ENCODE measurements at regions of chr1 and their contacts with region 1.

Region 1: GRCh38 chr1:151993654-151994496 is at the start of gene S100A10:
- DNase-seq: peak; percentile 64 to 82 (median 81)
- ATAC-seq: peak; percentile 85
- H3K4me3 ChIP-seq: peak within 1 kb of the TSS; percentile 88
- H3K4me3 Mint-ChIP-seq: peak within 1 kb of the TSS; percentile 90 to 100 (median 96)
- H3K27ac ChIP-seq: peak within 1 kb of the TSS; percentile 83
- H3K27ac Mint-ChIP-seq: peak within 1 kb of the TSS; percentile 89 to 98 (median 95)
- H3K4me1 ChIP-seq: peaks cover 22 to 37% of the 10 kb centered on the region in 2 donors
- H3K4me1 Mint-ChIP-seq: peaks cover 33 to 56% (median 45%) of the 10 kb centered on the region in 7 donors
- H3K27me3 ChIP-seq: no peaks in the 10 kb centered on the region
- H3K27me3 Mint-ChIP-seq: peaks cover 0 to 10% (median 0%) of the 10 kb centered on the region in 5 donors
- total RNA-seq, gene S100A10: 131 to 361 (median 143) TPM

Region 2: GRCh38 chr1:151539990-151540981 is 453.6 kb before region 1 on chr1 and contains the start of gene TUFT1:
- CTCF ChIA-PET with region 1: interaction called, 5 read pairs
- POLR2A ChIA-PET with region 1: no interaction called
- intact Hi-C with region 1: loop called in 1 of 2 experiments (anchors 5 kb)
- DNase-seq: peak; percentile 89 to 95 (median 93)
- ATAC-seq: peak; percentile 100
- H3K4me3 ChIP-seq: peak within 1 kb of the TSS; percentile 90
- H3K4me3 Mint-ChIP-seq: peak within 1 kb of the TSS; percentile 91 to 98 (median 97)
- H3K27ac ChIP-seq: peak within 1 kb of the TSS; percentile 71
- H3K27ac Mint-ChIP-seq: peak within 1 kb of the TSS; percentile 70 to 93 (median 89)
- H3K4me1 ChIP-seq: peaks cover 11 to 18% of the 10 kb centered on the region in 2 donors
- H3K4me1 Mint-ChIP-seq: peaks cover 12 to 31% (median 22%) of the 10 kb centered on the region in 7 donors
- H3K27me3 ChIP-seq: no peaks in the 10 kb centered on the region
- H3K27me3 Mint-ChIP-seq: peaks cover 6 to 24% (median 8%) of the 10 kb centered on the region in 5 donors
- total RNA-seq, gene TUFT1: 0.92 to 4.8 (median 3.4) TPM

Region 3: DNA sequence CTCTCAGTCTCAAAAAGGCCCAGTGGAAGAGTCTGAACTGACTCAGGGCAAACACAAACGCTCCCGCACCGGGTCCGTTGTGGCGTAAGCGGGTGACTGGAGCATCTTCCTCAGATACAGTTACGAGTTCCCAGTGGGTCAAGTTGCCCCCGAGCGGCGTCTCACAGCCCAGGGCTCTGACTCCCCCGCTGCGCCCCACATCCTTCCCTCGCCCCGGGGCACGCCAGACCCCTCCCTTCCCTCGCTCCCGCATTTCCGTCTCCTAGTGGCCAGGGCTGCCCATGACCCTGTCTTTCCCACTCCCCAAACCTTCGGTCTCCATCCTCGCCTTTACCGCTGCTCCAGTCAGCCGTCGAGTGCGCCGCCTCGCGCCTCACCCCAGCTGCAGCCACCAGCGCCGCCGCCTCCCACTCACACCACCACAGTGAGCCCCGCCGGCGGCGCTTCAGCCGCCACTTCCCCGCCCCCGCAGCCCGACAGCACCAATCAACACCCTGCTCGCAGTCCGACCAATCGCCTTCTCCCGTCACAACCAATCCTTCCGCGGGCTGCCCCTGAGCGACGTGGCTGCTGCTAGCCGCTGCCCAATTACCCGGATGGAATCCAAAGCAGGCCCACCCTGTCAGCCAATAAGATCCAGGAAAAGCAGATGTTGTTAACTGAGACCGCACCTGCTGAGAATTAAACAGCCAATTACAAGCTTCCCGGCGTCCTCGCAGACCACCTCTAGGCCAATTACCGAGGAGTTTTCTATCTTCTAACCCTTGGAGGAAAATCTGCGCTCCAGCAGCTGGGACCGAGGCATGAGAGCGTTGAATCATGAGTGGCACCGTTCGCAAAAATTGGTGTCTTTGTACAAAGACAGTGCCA is 203.6 kb before region 1 on chr1 and contains the start of gene TDRKH:
- CTCF ChIA-PET with region 1: no interaction called
- POLR2A ChIA-PET with region 1: no interaction called
- intact Hi-C with region 1: loop called in 1 of 2 experiments (anchors 2 kb)
- DNase-seq: peak; percentile 93 to 99 (median 99)
- ATAC-seq: peak; percentile 97
- H3K4me3 ChIP-seq: peak within 1 kb of the TSS; percentile 88
- H3K4me3 Mint-ChIP-seq: peak within 1 kb of the TSS; percentile 91 to 99 (median 97)
- H3K27ac ChIP-seq: peak within 1 kb of the TSS; percentile 60
- H3K27ac Mint-ChIP-seq: peak within 1 kb of the TSS; percentile 75 to 93 (median 89)
- H3K4me1 ChIP-seq: peaks cover 0 to 14% of the 10 kb centered on the region in 2 donors
- H3K4me1 Mint-ChIP-seq: peaks cover 6 to 38% (median 30%) of the 10 kb centered on the region in 7 donors
- H3K27me3 ChIP-seq: no peaks in the 10 kb centered on the region
- H3K27me3 Mint-ChIP-seq: peaks cover 0 to 2% (median 0%) of the 10 kb centered on the region in 5 donors
- total RNA-seq, gene TDRKH: 7.7 to 23.1 (median 17.0) TPM

Region 4: DNA sequence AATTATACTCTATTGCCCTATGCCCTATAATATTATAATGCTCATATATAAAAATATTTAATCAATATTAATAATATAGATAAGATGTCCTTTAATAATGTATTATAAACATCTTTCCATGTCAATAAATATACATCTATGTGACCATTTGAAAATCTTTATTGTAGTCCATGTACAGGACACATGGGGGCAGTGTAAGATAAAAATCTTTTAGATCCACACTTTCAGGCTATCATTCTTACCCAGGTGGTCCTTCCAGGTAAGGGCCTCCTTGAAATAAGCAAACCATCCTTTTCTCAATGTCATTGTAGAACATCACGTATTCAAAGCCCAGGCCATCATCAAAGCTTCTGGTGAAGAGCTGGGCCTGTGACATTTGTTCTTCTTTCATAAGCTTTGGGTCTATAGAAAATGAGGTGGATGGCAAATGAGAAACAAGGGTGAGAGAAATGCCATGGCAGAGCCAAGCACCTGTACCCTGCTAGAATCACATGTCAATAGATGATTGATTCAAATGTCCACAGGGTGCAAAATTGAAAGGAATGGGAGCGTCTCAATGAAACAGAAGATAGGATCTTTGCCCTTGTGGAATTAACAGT is 104.8 kb before region 1 on chr1:
- CTCF ChIA-PET with region 1: interaction called, 67 read pairs
- POLR2A ChIA-PET with region 1: interaction called, 9 read pairs
- intact Hi-C with region 1: loop called (anchors 1 kb)
- DNase-seq: peak in 5 of 9 donors; percentile 27 to 48 (median 37)
- ATAC-seq: peak; percentile 68
- H3K4me3 ChIP-seq: no peak overlapping the region
- H3K4me3 Mint-ChIP-seq: no peak overlapping the region
- H3K27ac ChIP-seq: no peak overlapping the region
- H3K27ac Mint-ChIP-seq: peak overlapping the region in 7 of 9 donors; percentile 7 to 91 (median 70)
- H3K4me1 ChIP-seq: peaks cover 0 to 12% of the 10 kb centered on the region in 2 donors
- H3K4me1 Mint-ChIP-seq: peaks cover 18 to 40% (median 38%) of the 10 kb centered on the region in 7 donors
- H3K27me3 ChIP-seq: no peaks in the 10 kb centered on the region
- H3K27me3 Mint-ChIP-seq: no peaks in the 10 kb centered on the region

Region 5: DNA sequence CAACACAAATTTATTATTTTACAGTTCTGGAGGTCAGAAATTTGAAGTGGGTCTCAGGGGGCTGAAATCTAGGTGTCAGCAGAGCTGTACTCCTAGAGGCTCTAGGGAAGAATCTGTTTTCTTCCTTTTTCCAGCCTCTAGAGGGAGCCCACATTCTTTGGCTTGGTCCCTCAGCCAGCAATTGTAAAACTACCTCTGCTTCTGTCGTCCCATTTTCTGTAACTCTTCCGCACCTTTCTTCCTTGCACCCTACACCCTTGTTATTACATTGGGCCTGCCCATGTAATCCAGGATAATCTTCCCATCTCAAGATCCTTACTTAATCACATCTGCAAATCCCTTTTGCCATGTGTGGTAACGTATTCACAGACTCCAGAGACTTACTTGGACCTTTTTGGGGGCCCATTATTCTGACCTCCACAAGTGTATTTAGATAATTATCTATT is 59.8 kb before region 1 on chr1:
- CTCF ChIA-PET with region 1: interaction called, 88 read pairs
- POLR2A ChIA-PET with region 1: interaction called, 6 read pairs
- intact Hi-C with region 1: loop called (anchors 1 kb)
- DNase-seq: peak in 7 of 9 donors; percentile 31 to 69 (median 59)
- ATAC-seq: peak; percentile 94
- H3K4me3 ChIP-seq: no peak overlapping the region
- H3K4me3 Mint-ChIP-seq: peak overlapping the region in 1 of 10 donors; percentile 49
- H3K27ac ChIP-seq: no peak overlapping the region
- H3K27ac Mint-ChIP-seq: peak overlapping the region in 1 of 9 donors; percentile 41
- H3K4me1 ChIP-seq: no peaks in the 10 kb centered on the region
- H3K4me1 Mint-ChIP-seq: peaks cover 0 to 6% (median 4%) of the 10 kb centered on the region in 7 donors
- H3K27me3 ChIP-seq: no peaks in the 10 kb centered on the region
- H3K27me3 Mint-ChIP-seq: peaks cover 0 to 33% (median 0%) of the 10 kb centered on the region in 5 donors

Region 6: DNA sequence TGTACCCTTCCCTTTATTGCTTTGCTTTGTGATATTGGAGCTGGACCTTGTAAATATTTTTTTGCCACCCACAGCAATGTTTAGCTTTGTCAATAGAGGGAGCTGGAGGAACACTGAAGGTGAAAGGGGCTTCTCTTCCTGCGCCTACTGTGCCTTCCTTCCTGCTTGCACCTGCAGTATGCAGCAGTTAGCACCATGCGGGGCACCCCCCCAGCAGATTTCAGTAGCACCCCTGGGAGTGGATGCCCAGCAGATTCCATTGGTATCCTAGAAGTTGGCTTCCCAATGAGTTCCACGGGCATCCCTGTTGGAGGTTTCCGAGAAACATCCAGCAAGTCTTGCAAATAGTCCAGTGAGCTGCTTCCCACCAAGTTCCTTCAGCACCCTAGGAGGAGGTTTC is 25.8 kb before region 1 on chr1:
- CTCF ChIA-PET with region 1: interaction called, 205 read pairs
- POLR2A ChIA-PET with region 1: interaction called, 13 read pairs
- intact Hi-C with region 1: loop called (anchors 1 kb)
- DNase-seq: peak in 8 of 9 donors; percentile 39 to 76 (median 68)
- ATAC-seq: peak; percentile 93
- H3K4me3 ChIP-seq: no peak overlapping the region
- H3K4me3 Mint-ChIP-seq: no peak overlapping the region
- H3K27ac ChIP-seq: no peak overlapping the region
- H3K27ac Mint-ChIP-seq: no peak overlapping the region
- H3K4me1 ChIP-seq: peaks cover 4 to 5% of the 10 kb centered on the region in 2 donors
- H3K4me1 Mint-ChIP-seq: peaks cover 5 to 20% (median 7%) of the 10 kb centered on the region in 7 donors
- H3K27me3 ChIP-seq: no peaks in the 10 kb centered on the region
- H3K27me3 Mint-ChIP-seq: peaks cover 0 to 20% (median 0%) of the 10 kb centered on the region in 5 donors